ENCODE measurements at regions of chr1 and their contacts with region 1.

Region 1: DNA sequence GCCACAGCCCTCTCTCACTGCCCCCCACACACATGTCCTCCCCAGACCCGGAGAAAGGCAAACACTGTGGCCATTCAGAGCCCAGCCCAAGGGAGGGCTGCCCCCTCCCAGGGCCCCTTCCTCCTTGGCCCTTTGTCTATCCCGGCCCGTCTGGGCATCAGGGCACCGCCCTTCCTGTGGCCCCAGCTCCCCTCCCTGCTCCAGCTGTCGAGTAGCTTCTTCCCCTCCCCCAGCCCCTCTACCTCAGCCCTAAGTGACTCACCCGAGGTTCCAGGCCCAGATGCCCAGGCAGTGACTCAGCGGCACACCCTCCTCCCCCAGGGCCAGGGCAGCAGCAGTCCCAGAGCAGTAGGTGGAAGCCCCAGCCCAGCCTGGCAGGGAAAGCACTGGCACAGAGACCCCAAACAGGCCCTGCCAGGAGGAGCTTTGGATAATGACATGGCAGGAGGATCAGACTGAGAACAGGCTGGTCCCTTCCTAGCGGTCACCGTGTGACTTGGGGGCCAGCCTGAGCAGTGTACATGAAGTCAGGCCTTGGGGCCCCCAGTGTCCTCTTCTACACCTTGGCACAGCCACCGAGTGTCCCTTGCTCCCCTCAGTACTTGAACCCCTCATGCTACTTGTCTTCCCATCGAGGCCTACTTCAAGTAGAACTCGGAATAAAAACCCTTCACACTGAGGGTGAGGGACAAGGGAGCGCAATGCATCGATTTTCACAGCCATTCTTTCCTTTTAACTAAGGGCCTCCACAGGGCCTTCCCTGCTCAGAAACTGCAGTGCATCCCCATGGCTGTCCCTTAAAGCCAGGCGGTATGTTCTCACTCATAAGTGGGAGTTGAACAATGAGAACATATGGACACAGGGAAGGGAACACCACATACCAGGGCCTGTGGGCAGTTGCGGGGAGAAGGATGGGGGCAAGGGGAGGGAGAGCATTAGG is 1.1 kb upstream of the S100A2 start:
- DNase-seq: peak; percentile 33 to 93 (median 83)
- ATAC-seq: peak; percentile 85
- H3K4me3 ChIP-seq: no peak overlapping the region
- H3K4me3 Mint-ChIP-seq: no peak overlapping the region
- H3K27ac ChIP-seq: peak overlapping the region; percentile 35 to 64
- H3K27ac Mint-ChIP-seq: peak overlapping the region; percentile 89
- H3K4me1 ChIP-seq: peaks cover 39% of the 10 kb centered on the region
- H3K4me1 Mint-ChIP-seq: peaks cover 32% of the 10 kb centered on the region
- H3K27me3 ChIP-seq: no peaks in the 10 kb centered on the region
- H3K27me3 Mint-ChIP-seq: no peaks in the 10 kb centered on the region
- CTCF ChIP-seq: no peak

Region 2: DNA sequence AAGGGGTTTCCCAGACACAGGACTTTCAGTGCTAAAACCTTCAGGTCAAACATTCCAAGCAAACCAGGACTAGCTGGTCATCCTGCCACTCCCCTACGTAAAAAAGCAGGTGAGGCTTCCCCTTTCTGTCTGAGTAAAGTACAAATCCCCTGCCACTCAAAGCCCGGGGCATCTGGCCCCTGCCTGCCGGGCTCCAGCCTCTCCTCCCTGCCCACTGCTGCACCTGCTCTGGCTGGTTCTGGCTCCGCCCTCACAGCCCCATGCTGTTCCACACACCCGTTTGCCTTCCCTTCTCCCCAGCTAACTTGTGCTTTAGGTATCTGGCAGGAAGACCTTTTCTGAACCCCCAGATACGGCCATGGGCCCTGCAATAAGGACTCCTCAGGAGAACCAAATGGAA is 82.9 kb before region 1 on chr1:
- CTCF ChIA-PET with region 1: no interaction called
- POLR2A ChIA-PET with region 1: no interaction called
- intact Hi-C with region 1: no loop called
- DNase-seq: no peak
- ATAC-seq: no peak
- H3K4me3 ChIP-seq: no peak overlapping the region
- H3K4me3 Mint-ChIP-seq: no peak overlapping the region
- H3K27ac ChIP-seq: no peak overlapping the region
- H3K27ac Mint-ChIP-seq: no peak overlapping the region
- H3K4me1 ChIP-seq: no peaks in the 10 kb centered on the region
- H3K4me1 Mint-ChIP-seq: no peaks in the 10 kb centered on the region
- H3K27me3 ChIP-seq: peaks cover 12 to 31% of the 10 kb centered on the region in 2 experiments
- H3K27me3 Mint-ChIP-seq: peaks cover 70% of the 10 kb centered on the region
- CTCF ChIP-seq: no peak

Region 3: DNA sequence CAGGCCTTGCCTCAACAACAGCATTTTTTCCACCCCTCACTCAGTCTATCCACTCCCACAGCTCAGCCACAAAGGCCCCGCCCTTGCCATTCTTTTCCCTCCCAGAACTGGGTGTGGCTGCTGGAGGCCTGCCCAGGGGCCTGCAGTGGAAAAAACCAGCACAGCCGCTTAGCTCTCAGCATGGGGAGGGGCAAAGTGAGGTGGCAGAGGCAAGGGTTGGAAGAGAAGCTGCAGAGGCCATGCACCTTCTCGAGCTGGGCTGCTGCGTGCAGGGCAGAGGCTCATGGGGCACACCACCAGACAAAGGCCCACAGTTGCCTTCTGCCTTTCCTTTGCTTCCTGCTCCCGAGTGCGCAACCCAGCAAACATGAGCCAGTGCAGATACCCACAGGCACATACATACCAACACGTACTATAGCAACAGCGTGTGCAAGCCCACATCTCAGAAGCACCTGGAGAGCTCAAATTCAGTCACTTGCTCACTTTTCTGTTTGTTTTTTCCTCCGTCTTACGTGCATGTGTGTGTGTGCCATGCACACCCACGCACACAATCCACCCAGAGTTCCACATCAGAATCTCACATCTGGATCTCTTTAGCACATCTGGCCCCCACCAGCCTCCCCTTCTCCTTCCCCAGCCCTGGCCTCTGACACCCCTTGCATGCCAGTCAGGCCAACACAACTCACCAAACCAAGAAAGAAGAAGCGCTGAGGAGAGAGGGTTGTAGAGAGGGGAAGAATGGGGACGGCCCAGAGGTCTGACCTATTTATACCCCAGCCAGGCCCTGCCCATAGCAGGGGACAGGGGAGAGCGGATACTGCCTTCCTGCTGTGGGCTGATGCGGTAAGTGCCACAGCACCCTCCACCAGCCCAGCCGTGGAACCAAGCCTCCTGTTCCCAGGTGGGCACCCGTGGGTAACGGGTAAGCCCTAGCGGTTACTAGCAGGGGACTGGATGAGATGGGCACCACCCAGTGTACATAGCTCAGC is 21.3 kb before region 1 on chr1 and contains the start of gene S100A4:
- CTCF ChIA-PET with region 1: interaction called, 15 read pairs
- POLR2A ChIA-PET with region 1: interaction called, 14 read pairs
- intact Hi-C with region 1: loop called in 1 of 2 experiments (anchors 2 kb)
- DNase-seq: peak; percentile 65 to 95 (median 88)
- ATAC-seq: peak; percentile 81
- H3K4me3 ChIP-seq: peak within 1 kb of the TSS; percentile 82
- H3K4me3 Mint-ChIP-seq: peak within 1 kb of the TSS; percentile 88
- H3K27ac ChIP-seq: peak within 1 kb of the TSS; percentile 83 to 85
- H3K27ac Mint-ChIP-seq: peak within 1 kb of the TSS; percentile 98
- H3K4me1 ChIP-seq: peaks cover 83% of the 10 kb centered on the region
- H3K4me1 Mint-ChIP-seq: peaks cover 72% of the 10 kb centered on the region
- H3K27me3 ChIP-seq: no peaks in the 10 kb centered on the region
- H3K27me3 Mint-ChIP-seq: no peaks in the 10 kb centered on the region
- CTCF ChIP-seq: no peak
- total RNA-seq, gene S100A4: 297 to 299 TPM

Measured in CD4-positive, alpha-beta T cell (primary cell).